ENCODE measurements at regions of chr9 and their contacts with region 1.

Region 1: GRCh38 chr9:98087420-98088354 is 31.2 kb downstream of the NANS start:
- DNase-seq: peak; percentile 39 to 72 (median 56)
- H3K4me3 ChIP-seq: peak overlapping the region; percentile 27
- H3K27ac ChIP-seq: peak overlapping the region; percentile 18 to 55
- H3K4me1 ChIP-seq: peaks cover 7% of the 10 kb centered on the region
- H3K27me3 ChIP-seq: no peaks in the 10 kb centered on the region
- CTCF ChIP-seq: no peak
- EP300 ChIP-seq: no peak
- POLR2A ChIP-seq: no peak

Region 2: GRCh38 chr9:98135558-98136332 is 48.1 kb after region 1 on chr9:
- intact Hi-C with region 1: loop called in 1 of 4 experiments (anchors 2 kb)
- DNase-seq: no peak
- H3K4me3 ChIP-seq: no peak overlapping the region
- H3K27ac ChIP-seq: no peak overlapping the region
- H3K4me1 ChIP-seq: no peaks in the 10 kb centered on the region
- H3K27me3 ChIP-seq: no peaks in the 10 kb centered on the region
- CTCF ChIP-seq: no peak
- EP300 ChIP-seq: no peak
- POLR2A ChIP-seq: no peak

Measured in ovary (tissue), 10 donors.